Right cardiac atrium (tissue), 5 donors: ENCODE measurements at regions of chr1 and their contacts with region 1.

Region 1: DNA sequence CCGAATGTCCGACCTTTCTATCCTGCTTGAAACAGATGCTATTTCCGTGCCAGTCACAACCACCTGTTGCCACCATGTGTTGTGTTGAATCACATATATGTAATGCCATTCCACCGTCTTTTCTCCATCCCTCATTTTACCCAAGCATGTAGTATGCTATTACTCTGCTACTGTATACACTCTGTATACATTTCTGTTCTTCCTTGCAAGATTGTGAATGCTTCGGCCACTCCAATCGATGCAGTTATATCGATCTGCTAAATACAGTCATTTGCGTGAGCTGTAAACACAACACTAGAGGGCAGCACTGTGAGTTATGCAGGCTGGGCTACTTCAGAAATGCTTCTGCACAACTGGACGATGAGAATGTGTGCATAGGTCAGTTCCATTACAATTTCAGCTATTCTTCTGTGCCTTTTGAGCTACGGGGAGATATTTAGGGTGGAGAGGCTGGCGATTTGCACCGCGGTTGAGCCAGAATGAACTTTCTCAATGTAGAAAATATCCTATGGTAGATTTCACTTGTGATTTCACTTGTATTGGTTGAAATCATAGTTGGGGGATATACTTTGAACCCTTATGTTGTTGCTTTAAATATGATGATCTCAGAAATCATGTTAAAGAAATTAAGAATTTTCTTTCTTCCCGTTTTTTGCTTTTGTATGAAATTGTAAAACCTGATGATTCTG is 289.8 kb downstream of the NTNG1 start:
- DNase-seq: no peak
- ATAC-seq: no peak
- H3K4me3 ChIP-seq: no peak overlapping the region
- H3K27ac ChIP-seq: no peak overlapping the region
- H3K4me1 ChIP-seq: no peaks in the 10 kb centered on the region
- H3K27me3 ChIP-seq: no peaks in the 10 kb centered on the region

Region 2: DNA sequence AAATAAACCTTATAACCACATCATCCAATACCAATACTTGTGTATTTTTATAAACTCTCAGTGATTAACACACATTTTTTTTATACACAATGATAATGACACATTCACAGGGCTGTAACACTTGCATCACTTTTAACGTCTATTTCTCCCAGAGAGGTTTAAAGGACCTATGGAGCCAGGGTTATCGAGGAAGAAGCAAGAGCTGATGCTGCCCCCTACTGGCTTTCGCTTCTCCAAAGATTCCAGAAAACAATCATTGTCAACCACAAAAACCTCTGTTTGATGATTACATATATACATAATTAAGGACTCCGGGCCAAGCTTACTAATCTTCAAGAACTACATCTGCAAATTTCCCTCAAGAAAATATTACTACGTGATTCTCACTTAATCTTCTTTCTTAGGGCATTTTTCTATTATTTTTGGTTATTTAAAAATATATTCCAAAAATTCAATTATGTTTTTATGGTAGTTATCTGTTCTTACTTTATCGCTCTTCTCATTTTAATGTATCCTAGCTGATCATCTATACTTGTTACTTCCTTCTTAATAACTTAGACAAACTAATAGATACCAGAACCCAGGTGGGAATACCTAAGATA is 319.8 kb after region 1 on chr1:
- intact Hi-C with region 1: loop called in 1 of 4 experiments (anchors 5 kb)
- DNase-seq: peak in 2 of 3 donors; percentile 22 to 68
- ATAC-seq: no peak
- H3K4me3 ChIP-seq: no peak overlapping the region
- H3K27ac ChIP-seq: no peak overlapping the region
- H3K4me1 ChIP-seq: no peaks in the 10 kb centered on the region
- H3K27me3 ChIP-seq: no peaks in the 10 kb centered on the region